ENCODE measurements at regions of chr2 and their contacts with region 1.

Region 1: DNA sequence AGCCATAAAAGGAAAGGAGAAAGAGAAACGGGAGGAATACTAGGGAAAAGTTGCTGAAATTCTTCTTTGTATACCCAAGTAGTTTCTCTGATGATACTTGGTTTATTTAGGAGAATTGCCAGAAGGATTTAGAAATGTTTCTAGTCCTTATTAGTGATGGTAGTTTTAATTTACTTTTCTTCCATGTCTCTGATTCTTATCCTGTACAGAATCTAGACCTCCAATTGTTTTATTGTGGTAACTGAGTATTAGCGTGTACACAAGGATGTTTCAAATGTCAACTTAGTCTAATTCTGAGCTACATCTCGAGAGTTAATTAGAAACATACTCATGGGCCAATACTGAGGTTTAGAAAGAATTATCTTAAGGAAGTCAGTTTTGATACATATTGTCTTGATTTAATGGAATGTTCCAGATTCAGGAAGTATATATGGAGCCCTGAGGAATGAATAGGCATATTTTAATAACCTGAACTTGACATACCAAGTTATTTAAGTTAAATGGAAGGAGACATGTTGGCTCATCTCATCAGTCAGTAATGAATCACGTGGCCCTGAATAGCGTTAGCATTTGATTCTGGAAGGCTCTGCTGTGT is 219.6 kb downstream of the LTBP1 start:
- DNase-seq: no peak

Region 2: GRCh38 chr2:33051586-33052360 is 114.6 kb before region 1 on chr2:
- intact Hi-C with region 1: no loop called
- DNase-seq: no peak

Region 3: DNA sequence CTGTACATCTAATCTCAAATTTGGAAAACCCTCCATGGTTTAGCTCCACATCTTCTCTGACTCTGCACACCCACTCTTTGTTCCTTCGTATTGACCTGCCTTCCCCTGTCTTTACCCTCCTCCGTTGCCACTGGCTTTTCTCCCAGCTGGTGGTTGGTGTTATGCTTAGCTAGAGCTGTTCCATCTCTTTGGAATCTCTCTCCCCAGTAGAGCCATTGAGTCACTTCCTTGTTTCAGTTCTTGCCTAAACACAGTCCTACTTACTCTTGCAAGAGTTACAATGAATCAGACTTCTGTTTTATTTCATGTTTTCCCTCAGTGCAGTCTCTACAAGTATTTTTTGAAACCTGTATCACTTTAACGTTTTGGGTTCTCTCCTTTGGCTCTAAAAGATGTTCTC is 44.2 kb after region 1 on chr2:
- intact Hi-C with region 1: loop called in 1 of 2 experiments (anchors 10 kb)
- DNase-seq: peak; percentile 89

Measured in posterior vena cava (tissue), 2 donors.